ENCODE measurements at regions of chr1 and their contacts with region 1.

Region 1: GRCh38 chr1:96236156-96236739 is 485.3 kb upstream of the PTBP2 start:
- DNase-seq: peak; percentile 69
- H3K4me3 ChIP-seq: no peak overlapping the region
- H3K27ac ChIP-seq: no peak overlapping the region
- H3K4me1 ChIP-seq: peaks cover 8% of the 10 kb centered on the region
- H3K27me3 ChIP-seq: no peaks in the 10 kb centered on the region
- CTCF ChIP-seq: peak; percentile 72

Region 2: GRCh38 chr1:96036763-96037162 is 199.5 kb before region 1 on chr1:
- CTCF ChIA-PET with region 1: no interaction called
- POLR2A ChIA-PET with region 1: no interaction called
- intact Hi-C with region 1: no loop called
- DNase-seq: no peak
- H3K4me3 ChIP-seq: no peak overlapping the region
- H3K27ac ChIP-seq: no peak overlapping the region
- H3K4me1 ChIP-seq: no peaks in the 10 kb centered on the region
- H3K27me3 ChIP-seq: peaks cover 11% of the 10 kb centered on the region
- CTCF ChIP-seq: no peak

Region 3: DNA sequence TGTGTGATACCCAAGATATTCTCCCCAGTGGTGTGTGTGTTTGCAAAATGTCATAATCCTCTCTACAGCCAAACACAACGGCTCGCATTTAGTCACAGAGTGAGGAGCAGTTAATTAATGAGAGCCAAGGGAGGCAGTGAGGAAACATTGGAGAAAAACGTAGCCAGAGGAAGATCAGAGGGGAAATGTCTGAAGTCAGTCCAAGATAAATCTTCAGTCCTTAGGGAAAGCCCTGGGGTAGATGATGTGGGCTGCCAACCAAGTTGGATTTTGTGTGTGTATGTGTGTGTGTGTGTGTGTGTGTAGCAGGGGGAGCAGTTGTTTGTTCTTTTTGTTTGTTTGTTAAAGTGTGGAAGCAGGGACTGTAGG is 284.3 kb after region 1 on chr1:
- CTCF ChIA-PET with region 1: no interaction called
- POLR2A ChIA-PET with region 1: no interaction called
- intact Hi-C with region 1: loop called (anchors 10 kb)
- DNase-seq: peak; percentile 40
- H3K4me3 ChIP-seq: no peak overlapping the region
- H3K27ac ChIP-seq: no peak overlapping the region
- H3K4me1 ChIP-seq: peaks cover 13% of the 10 kb centered on the region
- H3K27me3 ChIP-seq: no peaks in the 10 kb centered on the region
- CTCF ChIP-seq: no peak

Region 4: DNA sequence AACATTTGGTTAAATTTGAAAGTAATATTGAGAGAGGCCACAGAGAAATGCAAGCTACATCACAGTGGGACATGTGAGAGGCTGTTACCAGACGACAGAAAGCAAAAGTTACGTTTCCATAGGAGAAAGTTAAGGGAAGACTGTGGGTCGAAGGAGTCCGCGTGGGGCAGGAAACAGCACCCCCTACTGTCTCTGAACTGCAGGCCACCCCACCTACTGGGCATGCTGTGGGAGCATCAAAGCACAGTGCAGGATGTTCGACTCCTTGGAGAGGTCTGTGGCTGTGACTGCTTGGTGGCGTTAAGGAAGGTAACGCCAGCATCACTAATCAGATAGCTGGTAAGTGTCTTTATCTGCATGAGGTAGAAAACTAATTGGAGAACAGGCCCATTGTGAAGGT is 609.2 kb after region 1 on chr1:
- CTCF ChIA-PET with region 1: no interaction called
- POLR2A ChIA-PET with region 1: no interaction called
- intact Hi-C with region 1: loop called (anchors 10 kb)
- DNase-seq: peak; percentile 53
- H3K4me3 ChIP-seq: no peak overlapping the region
- H3K27ac ChIP-seq: no peak overlapping the region
- H3K4me1 ChIP-seq: no peaks in the 10 kb centered on the region
- H3K27me3 ChIP-seq: no peaks in the 10 kb centered on the region
- CTCF ChIP-seq: peak; percentile 76

Region 5: GRCh38 chr1:97042551-97042950 is 806.3 kb after region 1 on chr1:
- CTCF ChIA-PET with region 1: no interaction called
- POLR2A ChIA-PET with region 1: no interaction called
- intact Hi-C with region 1: loop called (anchors 10 kb)
- DNase-seq: no peak
- H3K4me3 ChIP-seq: no peak overlapping the region
- H3K27ac ChIP-seq: no peak overlapping the region
- H3K4me1 ChIP-seq: no peaks in the 10 kb centered on the region
- H3K27me3 ChIP-seq: no peaks in the 10 kb centered on the region
- CTCF ChIP-seq: no peak

Measured in A673 (cell line).